ENCODE measurements at regions of chr1 and their contacts with region 1.

Region 1: GRCh38 chr1:153192697-153193096 is 10.5 kb upstream of the LELP1 start:
- DNase-seq: no peak
- H3K4me3 ChIP-seq: no peak overlapping the region
- H3K27ac ChIP-seq: no peak overlapping the region
- H3K4me1 ChIP-seq: peaks cover 0 to 13% (median 2%) of the 10 kb centered on the region in 3 donors
- H3K27me3 ChIP-seq: peaks cover 0 to 4% (median 0%) of the 10 kb centered on the region in 4 donors
- CTCF ChIP-seq: peak in 5 of 6 experiments; percentile 16 to 82 (median 63)
- POLR2A ChIP-seq: no peak

Region 2: GRCh38 chr1:152926091-152926490 is 266.6 kb before region 1 on chr1:
- intact Hi-C with region 1: loop called (anchors 5 kb)
- DNase-seq: no peak
- H3K4me3 ChIP-seq: no peak overlapping the region
- H3K27ac ChIP-seq: no peak overlapping the region
- H3K4me1 ChIP-seq: no peaks in the 10 kb centered on the region
- H3K27me3 ChIP-seq: no peaks in the 10 kb centered on the region
- CTCF ChIP-seq: peak; percentile 32 to 84 (median 48)
- POLR2A ChIP-seq: no peak

Region 3: GRCh38 chr1:153220606-153221303 is 28.1 kb after region 1 on chr1:
- intact Hi-C with region 1: no loop called
- DNase-seq: no peak
- H3K4me3 ChIP-seq: no peak overlapping the region
- H3K27ac ChIP-seq: no peak overlapping the region
- H3K4me1 ChIP-seq: peaks cover 0 to 6% (median 0%) of the 10 kb centered on the region in 3 donors
- H3K27me3 ChIP-seq: peaks cover 0 to 7% (median 0%) of the 10 kb centered on the region in 4 donors
- CTCF ChIP-seq: no peak
- POLR2A ChIP-seq: no peak

Region 4: GRCh38 chr1:153261281-153262069 is 68.8 kb after region 1 on chr1:
- intact Hi-C with region 1: no loop called
- DNase-seq: no peak
- H3K4me3 ChIP-seq: peak overlapping the region; percentile 34 to 71 (median 44)
- H3K27ac ChIP-seq: no peak overlapping the region
- H3K4me1 ChIP-seq: peaks cover 7 to 26% (median 14%) of the 10 kb centered on the region in 3 donors
- H3K27me3 ChIP-seq: peaks cover 0 to 67% (median 0%) of the 10 kb centered on the region in 4 donors
- CTCF ChIP-seq: no peak
- POLR2A ChIP-seq: no peak

Measured in esophagus squamous epithelium (tissue), 5 donors.